ENCODE measurements at regions of chr10 and their contacts with region 1.

Region 1: GRCh38 chr10:102195296-102195870 is 30.7 kb upstream of the ELOVL3 start:
- DNase-seq: no peak
- ATAC-seq: no peak
- H3K4me3 ChIP-seq: no peak overlapping the region
- H3K4me3 Mint-ChIP-seq: no peak overlapping the region
- H3K27ac ChIP-seq: no peak overlapping the region
- H3K27ac Mint-ChIP-seq: no peak overlapping the region
- H3K4me1 ChIP-seq: no peaks in the 10 kb centered on the region
- H3K4me1 Mint-ChIP-seq: no peaks in the 10 kb centered on the region
- H3K27me3 ChIP-seq: peaks cover 0 to 2% of the 10 kb centered on the region in 2 experiments
- H3K27me3 Mint-ChIP-seq: peaks cover 0 to 4% of the 10 kb centered on the region in 2 donors

Region 2: DNA sequence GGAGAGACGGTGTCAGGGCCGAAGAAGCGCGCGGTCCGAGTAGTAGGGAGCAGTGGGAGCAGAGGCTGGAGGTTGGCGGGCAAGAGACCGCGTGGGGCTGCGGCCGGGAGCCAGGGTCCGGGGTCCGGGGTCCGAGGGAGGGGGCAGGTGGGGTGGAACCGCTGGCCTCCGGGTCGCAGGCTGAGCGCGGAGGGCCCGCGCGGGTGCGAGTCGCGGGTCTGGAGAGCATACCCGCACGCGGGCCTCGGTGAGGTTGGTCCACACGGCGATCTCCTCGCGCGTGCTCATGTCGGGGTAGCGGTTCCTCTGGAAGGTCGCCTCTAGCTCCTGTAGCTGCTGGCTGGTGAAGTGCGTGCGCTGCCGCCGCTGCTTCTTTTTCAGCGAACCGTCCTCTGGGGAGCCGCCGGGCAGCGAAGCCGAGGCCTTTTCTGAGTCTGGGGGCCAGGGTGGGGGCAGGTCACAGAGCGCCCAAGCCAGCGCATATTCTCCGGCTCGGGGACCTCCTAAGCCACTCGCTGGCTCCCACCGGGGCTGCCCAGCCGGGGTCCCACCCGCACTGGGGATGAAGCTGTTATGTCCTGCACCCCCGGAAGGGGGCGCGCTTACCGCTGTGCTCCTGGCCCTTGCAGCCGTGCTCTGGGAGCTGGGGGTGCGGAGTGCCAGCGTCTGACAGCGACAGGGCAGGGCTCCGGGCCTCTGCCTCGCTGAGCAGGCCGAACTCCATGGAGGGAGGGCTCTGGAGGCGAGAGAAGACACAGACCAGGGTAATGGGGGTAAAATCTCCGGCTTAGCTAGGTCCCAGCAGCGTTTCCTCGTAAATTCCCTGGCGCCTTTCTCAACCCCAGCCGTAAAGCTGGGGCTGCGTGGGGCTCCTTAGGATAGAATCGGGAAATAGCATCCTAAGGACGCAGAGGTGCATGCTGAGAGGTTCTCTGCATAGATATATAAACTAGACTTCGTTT is 36.3 kb after region 1 on chr10:
- CTCF ChIA-PET with region 1: no interaction called
- POLR2A ChIA-PET with region 1: interaction called in 1 of 2 experiments, 10 read pairs
- DNase-seq: peak; percentile 18 to 82 (median 54)
- ATAC-seq: peak; percentile 42 to 68 (median 52)
- H3K4me3 ChIP-seq: peak overlapping the region; percentile 46 to 76
- H3K4me3 Mint-ChIP-seq: peak overlapping the region; percentile 67 to 81 (median 69)
- H3K27ac ChIP-seq: no peak overlapping the region
- H3K27ac Mint-ChIP-seq: peak overlapping the region in 1 of 2 donors; percentile 65
- H3K4me1 ChIP-seq: peaks cover 2 to 28% of the 10 kb centered on the region in 2 experiments
- H3K4me1 Mint-ChIP-seq: peaks cover 7 to 18% (median 15%) of the 10 kb centered on the region in 3 donors
- H3K27me3 ChIP-seq: peaks cover 3 to 74% of the 10 kb centered on the region in 2 experiments
- H3K27me3 Mint-ChIP-seq: peaks cover 43 to 59% of the 10 kb centered on the region in 2 donors

Region 3: GRCh38 chr10:102859911-102860310 is 664.5 kb after region 1 on chr10:
- CTCF ChIA-PET with region 1: no interaction called
- POLR2A ChIA-PET with region 1: no interaction called
- DNase-seq: no peak
- ATAC-seq: no peak
- H3K4me3 ChIP-seq: no peak overlapping the region
- H3K4me3 Mint-ChIP-seq: no peak overlapping the region
- H3K27ac ChIP-seq: no peak overlapping the region
- H3K27ac Mint-ChIP-seq: no peak overlapping the region
- H3K4me1 ChIP-seq: peaks cover 0 to 3% of the 10 kb centered on the region in 2 experiments
- H3K4me1 Mint-ChIP-seq: peaks cover 8 to 14% (median 13%) of the 10 kb centered on the region in 3 donors
- H3K27me3 ChIP-seq: no peaks in the 10 kb centered on the region
- H3K27me3 Mint-ChIP-seq: no peaks in the 10 kb centered on the region